ENCODE measurements at regions of chr7 and their contacts with region 1.

Region 1: GRCh38 chr7:8436965-8437364 is 3.6 kb downstream of the NXPH1 start:
- DNase-seq: peak; percentile 80
- ATAC-seq: peak; percentile 63
- H3K4me3 Mint-ChIP-seq: no peak overlapping the region
- H3K27ac Mint-ChIP-seq: no peak overlapping the region
- H3K4me1 Mint-ChIP-seq: peaks cover 18% of the 10 kb centered on the region
- H3K27me3 Mint-ChIP-seq: peaks cover 82% of the 10 kb centered on the region

Region 2: GRCh38 chr7:8724080-8724718 is 287.2 kb after region 1 on chr7:
- CTCF ChIA-PET with region 1: no interaction called
- POLR2A ChIA-PET with region 1: no interaction called
- intact Hi-C with region 1: loop called (anchors 1 to 5 kb)
- DNase-seq: peak; percentile 58
- ATAC-seq: no peak
- H3K4me3 Mint-ChIP-seq: no peak overlapping the region
- H3K27ac Mint-ChIP-seq: no peak overlapping the region
- H3K4me1 Mint-ChIP-seq: no peaks in the 10 kb centered on the region
- H3K27me3 Mint-ChIP-seq: no peaks in the 10 kb centered on the region

Region 3: DNA sequence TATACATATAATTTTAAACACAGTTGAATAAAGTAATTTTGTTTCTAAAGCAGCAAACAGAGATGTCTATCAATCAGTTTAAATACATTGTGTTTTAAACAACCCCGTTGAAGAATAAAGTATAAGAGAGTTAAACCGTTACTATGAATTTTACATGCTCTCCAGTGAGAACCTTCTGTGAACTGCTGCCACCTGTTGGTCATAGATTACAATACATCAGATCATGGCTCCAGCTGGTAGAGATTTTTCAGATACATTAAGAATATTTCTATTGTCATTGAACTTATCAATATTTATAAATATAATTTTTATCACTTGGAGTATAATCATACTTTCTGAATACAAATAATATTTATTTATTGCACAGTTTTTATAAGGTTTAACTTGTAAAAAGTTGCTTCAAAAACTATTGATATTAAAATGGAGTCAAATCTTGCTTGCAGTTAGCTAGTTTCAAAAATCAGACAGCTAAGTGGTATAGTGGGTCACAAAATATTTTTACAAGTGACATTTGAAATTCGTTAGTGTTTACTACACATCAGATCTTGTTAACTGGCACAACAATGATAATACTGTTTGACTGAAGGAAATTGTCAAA is 1975.6 kb after region 1 on chr7:
- CTCF ChIA-PET with region 1: no interaction called
- POLR2A ChIA-PET with region 1: no interaction called
- intact Hi-C with region 1: loop called in 1 of 2 experiments (anchors 5 kb)
- DNase-seq: peak; percentile 19
- ATAC-seq: no peak
- H3K4me3 Mint-ChIP-seq: no peak overlapping the region
- H3K27ac Mint-ChIP-seq: no peak overlapping the region
- H3K4me1 Mint-ChIP-seq: no peaks in the 10 kb centered on the region
- H3K27me3 Mint-ChIP-seq: peaks cover 1% of the 10 kb centered on the region

Measured in activated CD4-positive, alpha-beta T cell treated with anti-CD3 and anti-CD28 coated beads for 36 hours (primary cell).